ENCODE measurements at regions of chr10 and their contacts with region 1.

Region 1: GRCh38 chr10:5835446-5836095 is 22.3 kb upstream of the GDI2 start:
- DNase-seq: no peak
- ATAC-seq: no peak
- H3K4me3 ChIP-seq: no peak overlapping the region
- H3K4me3 Mint-ChIP-seq: no peak overlapping the region
- H3K27ac ChIP-seq: no peak overlapping the region
- H3K27ac Mint-ChIP-seq: peak overlapping the region; percentile 39
- H3K4me1 ChIP-seq: peaks cover 27 to 34% of the 10 kb centered on the region in 2 donors
- H3K4me1 Mint-ChIP-seq: peaks cover 36% of the 10 kb centered on the region
- H3K27me3 ChIP-seq: no peaks in the 10 kb centered on the region
- H3K27me3 Mint-ChIP-seq: no peaks in the 10 kb centered on the region
- CTCF ChIP-seq: no peak

Region 2: DNA sequence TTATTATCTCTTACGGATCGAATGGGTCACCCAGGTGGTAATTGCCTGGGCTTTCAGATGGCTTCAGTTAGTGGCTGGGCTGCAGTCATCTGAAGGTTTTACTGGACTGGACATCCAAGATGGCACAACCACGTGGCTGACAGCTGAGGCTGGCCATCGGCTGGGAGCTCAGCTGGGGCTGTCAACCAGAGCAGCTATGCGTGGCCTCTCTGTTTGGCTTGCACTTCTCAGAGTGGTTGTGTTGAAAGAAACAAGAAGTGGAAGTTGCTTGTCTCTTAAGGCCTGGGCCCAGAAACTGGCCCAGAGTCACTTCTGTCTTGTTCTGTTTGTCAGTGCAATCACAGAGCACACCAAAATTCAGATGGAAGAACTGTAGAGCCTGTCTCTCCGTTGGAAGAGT is 16.7 kb before region 1 on chr10:
- CTCF ChIA-PET with region 1: interaction called, 19 read pairs
- POLR2A ChIA-PET with region 1: interaction called, 35 read pairs
- intact Hi-C with region 1: no loop called
- DNase-seq: peak; percentile 72
- ATAC-seq: peak; percentile 54
- H3K4me3 ChIP-seq: peak overlapping the region in 1 of 5 experiments; percentile 4
- H3K4me3 Mint-ChIP-seq: peak overlapping the region; percentile 78
- H3K27ac ChIP-seq: peak overlapping the region; percentile 89 to 94
- H3K27ac Mint-ChIP-seq: peak overlapping the region; percentile 98
- H3K4me1 ChIP-seq: peaks cover 65 to 77% of the 10 kb centered on the region in 2 donors
- H3K4me1 Mint-ChIP-seq: peaks cover 64% of the 10 kb centered on the region
- H3K27me3 ChIP-seq: no peaks in the 10 kb centered on the region
- H3K27me3 Mint-ChIP-seq: no peaks in the 10 kb centered on the region
- CTCF ChIP-seq: no peak

Region 3: GRCh38 chr10:5927306-5927705 is 91.7 kb after region 1 on chr10:
- CTCF ChIA-PET with region 1: no interaction called
- POLR2A ChIA-PET with region 1: no interaction called
- intact Hi-C with region 1: no loop called
- DNase-seq: no peak
- ATAC-seq: no peak
- H3K4me3 ChIP-seq: no peak overlapping the region
- H3K4me3 Mint-ChIP-seq: no peak overlapping the region
- H3K27ac ChIP-seq: no peak overlapping the region
- H3K27ac Mint-ChIP-seq: no peak overlapping the region
- H3K4me1 ChIP-seq: no peaks in the 10 kb centered on the region
- H3K4me1 Mint-ChIP-seq: no peaks in the 10 kb centered on the region
- H3K27me3 ChIP-seq: no peaks in the 10 kb centered on the region
- H3K27me3 Mint-ChIP-seq: no peaks in the 10 kb centered on the region
- CTCF ChIP-seq: no peak

Measured in B cell (primary cell).